Uterus (tissue), 4 donors: ENCODE measurements at regions of chr21 and their contacts with region 1.

Region 1: GRCh38 chr21:32604464-32604863 is 7.7 kb downstream of the CFAP298 start:
- DNase-seq: no peak
- H3K4me3 ChIP-seq: no peak overlapping the region
- H3K27ac ChIP-seq: no peak overlapping the region
- H3K4me1 ChIP-seq: no peaks in the 10 kb centered on the region
- H3K27me3 ChIP-seq: no peaks in the 10 kb centered on the region
- CTCF ChIP-seq: no peak
- POLR2A ChIP-seq: no peak

Region 2: DNA sequence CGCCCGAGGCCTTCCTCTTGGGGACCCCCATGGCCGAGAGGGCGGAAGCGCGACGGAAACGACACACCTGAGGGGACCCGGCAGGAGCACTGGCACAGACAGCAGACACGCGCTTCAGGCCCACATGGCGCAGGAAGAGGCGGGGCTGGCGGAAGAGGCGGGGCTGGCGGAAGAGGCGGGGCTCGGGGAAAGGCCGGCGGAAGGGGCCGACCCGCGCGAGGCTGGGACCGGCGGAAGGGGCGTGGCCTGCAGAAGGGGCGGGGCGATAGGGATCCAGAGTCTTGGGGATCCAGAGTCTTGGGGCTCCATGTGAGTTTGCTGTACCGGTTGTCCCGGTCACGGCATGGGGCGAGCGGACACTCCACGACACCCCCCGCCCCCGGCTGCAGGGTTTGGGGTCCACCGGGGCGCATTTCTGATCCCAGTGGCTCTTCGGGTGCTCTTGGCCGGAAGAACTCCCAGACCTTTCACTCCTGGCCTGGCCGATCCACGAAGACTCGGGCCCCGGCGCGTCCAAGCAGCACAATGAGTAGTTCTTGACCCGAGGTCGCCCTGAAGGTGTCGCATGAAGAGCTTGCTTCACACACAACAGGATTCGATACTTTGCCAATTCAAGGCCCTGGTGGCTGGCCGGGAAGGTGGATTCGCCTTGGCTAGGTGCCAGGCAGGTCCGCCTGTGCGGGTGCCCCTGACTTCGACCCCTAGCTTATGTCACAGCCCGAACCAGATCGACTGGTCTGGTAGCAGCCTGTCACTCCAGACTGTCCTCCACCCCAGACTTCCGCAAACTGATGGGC is 211.4 kb before region 1 on chr21 and contains the start of gene URB1:
- intact Hi-C with region 1: no loop called
- DNase-seq: peak; percentile 91 to 96
- H3K4me3 ChIP-seq: peak within 1 kb of the TSS; percentile 82 to 96
- H3K27ac ChIP-seq: peak within 1 kb of the TSS; percentile 75 to 81
- H3K4me1 ChIP-seq: peaks cover 3% of the 10 kb centered on the region in 2 donors
- H3K27me3 ChIP-seq: no peaks in the 10 kb centered on the region
- CTCF ChIP-seq: no peak
- POLR2A ChIP-seq: peak; percentile 77 to 84
- total RNA-seq, gene URB1: 11.8 to 31.0 (median 26.0) TPM

Region 3: DNA sequence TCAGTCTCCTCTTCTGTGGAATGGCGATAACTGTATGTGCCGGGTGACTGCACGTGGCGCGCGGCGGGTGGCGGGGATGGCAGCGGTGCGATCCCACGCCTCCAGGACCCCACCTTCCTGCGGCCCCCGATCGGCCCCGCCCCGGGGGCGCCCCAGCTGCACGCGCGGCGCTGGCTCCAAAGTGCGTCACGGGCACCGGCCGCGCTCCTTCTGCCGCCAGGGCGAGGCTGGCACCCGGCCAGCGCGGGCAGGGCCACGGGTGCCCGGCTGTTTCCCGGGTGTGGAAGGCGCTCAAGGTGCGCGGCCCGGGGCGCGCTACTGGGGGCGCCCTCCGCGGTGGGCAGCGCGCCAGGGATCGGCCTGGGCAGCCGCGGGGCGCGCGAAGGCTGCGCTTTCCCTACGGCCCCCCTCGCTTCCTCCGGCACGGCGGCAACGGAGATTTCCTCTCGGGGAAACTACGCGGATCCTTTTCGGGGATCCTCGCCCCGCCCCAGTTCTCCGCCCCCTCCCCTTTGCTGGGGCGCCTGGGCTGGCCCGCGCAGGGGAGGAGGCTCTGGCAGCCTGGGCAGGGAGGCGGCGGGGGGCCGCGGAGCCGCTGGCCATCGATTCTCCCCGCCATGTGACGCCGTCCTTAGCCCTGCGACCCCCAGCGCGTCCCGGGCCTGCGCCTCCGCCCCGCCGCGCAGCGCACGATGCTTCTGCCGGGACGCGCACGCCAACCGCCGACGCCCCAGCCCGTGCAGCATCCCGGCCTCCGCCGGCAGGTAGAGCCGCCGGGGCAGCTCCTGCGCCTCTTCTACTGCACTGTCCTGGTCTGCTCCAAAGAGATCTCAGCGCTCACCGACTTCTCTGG is 192.1 kb before region 1 on chr21 and contains the start of gene EVA1C:
- intact Hi-C with region 1: loop called (anchors 10 kb)
- DNase-seq: peak; percentile 77 to 82
- H3K4me3 ChIP-seq: peak within 1 kb of the TSS; percentile 72 to 90
- H3K27ac ChIP-seq: peak within 1 kb of the TSS; percentile 98 to 100
- H3K4me1 ChIP-seq: peaks cover 0 to 14% of the 10 kb centered on the region in 2 donors
- H3K27me3 ChIP-seq: no peaks in the 10 kb centered on the region
- CTCF ChIP-seq: peak in 3 of 4 experiments; percentile 22 to 52 (median 46)
- POLR2A ChIP-seq: peak; percentile 56 to 76
- total RNA-seq, gene EVA1C: 8.3 to 105 (median 48.7) TPM

Region 4: DNA sequence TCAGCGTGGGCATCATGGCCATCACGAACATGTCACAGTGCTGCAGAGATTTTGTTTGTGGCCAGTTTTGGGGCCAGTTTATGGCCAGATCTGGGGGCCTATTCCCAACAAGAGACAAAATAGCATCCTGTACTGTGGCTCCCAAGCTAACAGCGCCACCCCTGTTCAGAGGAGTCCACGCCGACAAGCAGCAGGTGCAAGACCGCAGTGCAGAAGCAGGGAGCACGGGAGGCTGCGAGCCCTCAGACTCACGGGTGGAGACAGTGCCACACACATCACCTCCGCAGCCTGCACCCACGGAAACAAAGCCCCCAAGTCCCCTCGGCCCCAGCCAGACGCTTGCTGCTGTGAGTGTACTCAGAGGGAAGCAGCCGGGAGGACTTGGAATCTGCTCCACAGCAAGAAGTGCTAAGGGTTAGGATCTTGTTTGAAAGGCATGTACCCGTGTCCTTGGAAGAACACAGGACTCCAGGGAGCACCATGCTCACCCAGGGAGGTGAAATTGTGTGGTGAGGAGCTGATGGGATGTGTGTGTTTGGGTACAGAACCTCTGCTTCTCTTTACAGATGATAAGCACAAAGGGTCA is 26.3 kb before region 1 on chr21:
- intact Hi-C with region 1: no loop called
- DNase-seq: no peak
- H3K4me3 ChIP-seq: no peak overlapping the region
- H3K27ac ChIP-seq: no peak overlapping the region
- H3K4me1 ChIP-seq: no peaks in the 10 kb centered on the region
- H3K27me3 ChIP-seq: no peaks in the 10 kb centered on the region
- CTCF ChIP-seq: no peak
- POLR2A ChIP-seq: no peak